ENCODE measurements at regions of chr1 and their contacts with region 1.

Region 1: DNA sequence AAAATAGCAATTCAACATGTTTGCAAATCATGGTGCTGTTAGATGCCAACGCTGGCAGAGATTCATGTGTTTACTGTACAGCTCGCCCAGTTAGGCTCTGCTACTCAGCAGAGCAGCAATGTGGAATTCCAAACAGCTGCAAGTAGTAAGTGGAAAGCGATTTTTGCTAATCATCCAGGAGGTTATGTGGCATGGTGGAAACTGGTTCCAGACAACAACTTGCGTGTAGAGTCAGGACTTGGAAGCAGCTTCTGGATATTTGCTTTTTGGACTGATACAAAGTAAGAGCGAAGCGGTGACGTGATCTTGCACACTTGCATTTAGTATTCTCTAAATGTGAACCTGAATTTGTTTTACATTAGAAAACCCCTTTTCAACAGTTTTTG is 27.1 kb upstream of the HHAT start:
- DNase-seq: no peak
- H3K4me3 ChIP-seq: no peak overlapping the region
- H3K27ac ChIP-seq: no peak overlapping the region
- H3K4me1 ChIP-seq: no peaks in the 10 kb centered on the region
- H3K27me3 ChIP-seq: no peaks in the 10 kb centered on the region
- CTCF ChIP-seq: no peak
- POLR2A ChIP-seq: no peak

Region 2: GRCh38 chr1:210151052-210151672 is 150.4 kb before region 1 on chr1:
- intact Hi-C with region 1: loop called in 1 of 2 experiments (anchors 10 kb)
- DNase-seq: no peak
- H3K4me3 ChIP-seq: no peak overlapping the region
- H3K27ac ChIP-seq: no peak overlapping the region
- H3K4me1 ChIP-seq: no peaks in the 10 kb centered on the region
- H3K27me3 ChIP-seq: no peaks in the 10 kb centered on the region
- CTCF ChIP-seq: no peak
- POLR2A ChIP-seq: no peak

Region 3: DNA sequence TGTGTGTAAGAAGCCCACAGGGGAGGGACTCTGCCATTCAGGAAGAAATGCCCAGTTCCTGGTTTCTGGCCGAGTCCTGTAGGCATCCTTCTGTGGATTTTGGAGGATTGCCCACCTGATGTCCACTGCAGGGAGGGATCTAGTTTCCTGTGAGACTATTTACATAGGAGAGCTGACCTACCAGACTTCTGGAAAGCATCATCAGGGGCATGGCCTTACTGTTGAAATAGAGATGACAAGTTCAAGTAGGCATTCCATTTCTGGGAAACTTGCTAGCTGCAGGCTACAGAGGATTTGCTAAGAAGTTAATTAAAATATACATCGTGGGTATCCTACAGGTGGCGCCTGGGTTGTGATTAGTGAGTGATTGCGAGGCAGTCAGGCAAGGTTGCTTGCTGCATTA is 175.8 kb after region 1 on chr1:
- intact Hi-C with region 1: no loop called
- DNase-seq: no peak
- H3K4me3 ChIP-seq: no peak overlapping the region
- H3K27ac ChIP-seq: no peak overlapping the region
- H3K4me1 ChIP-seq: no peaks in the 10 kb centered on the region
- H3K27me3 ChIP-seq: no peaks in the 10 kb centered on the region
- CTCF ChIP-seq: no peak
- POLR2A ChIP-seq: no peak